ENCODE measurements at regions of chr12 and their contacts with region 1.

Region 1: GRCh38 chr12:47725893-47726292 is 603 bp upstream of the ENDOU start:
- DNase-seq: no peak
- H3K4me3 ChIP-seq: no peak overlapping the region
- H3K27ac ChIP-seq: no peak overlapping the region
- H3K4me1 ChIP-seq: no peaks in the 10 kb centered on the region
- H3K27me3 ChIP-seq: no peaks in the 10 kb centered on the region
- CTCF ChIP-seq: no peak
- POLR2A ChIP-seq: no peak

Region 2: GRCh38 chr12:47767216-47767724 is 41.4 kb after region 1 on chr12:
- CTCF ChIA-PET with region 1: interaction called, 162 read pairs
- POLR2A ChIA-PET with region 1: no interaction called
- dilution Hi-C with region 1: no loop called
- intact Hi-C with region 1: no loop called
- DNase-seq: peak; percentile 66
- H3K4me3 ChIP-seq: no peak overlapping the region
- H3K27ac ChIP-seq: no peak overlapping the region
- H3K4me1 ChIP-seq: peaks cover 6% of the 10 kb centered on the region
- H3K27me3 ChIP-seq: no peaks in the 10 kb centered on the region
- CTCF ChIP-seq: peak; percentile 64 to 66
- POLR2A ChIP-seq: no peak